ENCODE measurements at regions of chr3 and their contacts with region 1.

Region 1: GRCh38 chr3:79032686-79033318 is 735.0 kb downstream of the ROBO1 start:
- DNase-seq: no peak
- H3K4me3 ChIP-seq: no peak overlapping the region
- H3K27ac ChIP-seq: no peak overlapping the region
- H3K4me1 ChIP-seq: no peaks in the 10 kb centered on the region
- H3K27me3 ChIP-seq: no peaks in the 10 kb centered on the region
- CTCF ChIP-seq: peak in 5 of 6 experiments; percentile 59 to 75 (median 63)
- POLR2A ChIP-seq: no peak

Region 2: GRCh38 chr3:78660957-78661356 is 371.8 kb before region 1 on chr3:
- intact Hi-C with region 1: loop called (anchors 5 kb)
- DNase-seq: no peak
- H3K4me3 ChIP-seq: no peak overlapping the region
- H3K27ac ChIP-seq: no peak overlapping the region
- H3K4me1 ChIP-seq: peaks cover 0 to 3% (median 3%) of the 10 kb centered on the region in 3 donors
- H3K27me3 ChIP-seq: no peaks in the 10 kb centered on the region
- CTCF ChIP-seq: no peak
- POLR2A ChIP-seq: no peak

Region 3: GRCh38 chr3:78765671-78766485 is 266.9 kb before region 1 on chr3:
- intact Hi-C with region 1: no loop called
- DNase-seq: no peak
- H3K4me3 ChIP-seq: no peak overlapping the region
- H3K27ac ChIP-seq: no peak overlapping the region
- H3K4me1 ChIP-seq: no peaks in the 10 kb centered on the region
- H3K27me3 ChIP-seq: no peaks in the 10 kb centered on the region
- CTCF ChIP-seq: no peak
- POLR2A ChIP-seq: no peak

Region 4: GRCh38 chr3:78823852-78824251 is 208.9 kb before region 1 on chr3:
- intact Hi-C with region 1: no loop called
- DNase-seq: no peak
- H3K4me3 ChIP-seq: no peak overlapping the region
- H3K27ac ChIP-seq: no peak overlapping the region
- H3K4me1 ChIP-seq: peaks cover 0 to 22% (median 4%) of the 10 kb centered on the region in 3 donors
- H3K27me3 ChIP-seq: no peaks in the 10 kb centered on the region
- CTCF ChIP-seq: no peak
- POLR2A ChIP-seq: no peak

Region 5: DNA sequence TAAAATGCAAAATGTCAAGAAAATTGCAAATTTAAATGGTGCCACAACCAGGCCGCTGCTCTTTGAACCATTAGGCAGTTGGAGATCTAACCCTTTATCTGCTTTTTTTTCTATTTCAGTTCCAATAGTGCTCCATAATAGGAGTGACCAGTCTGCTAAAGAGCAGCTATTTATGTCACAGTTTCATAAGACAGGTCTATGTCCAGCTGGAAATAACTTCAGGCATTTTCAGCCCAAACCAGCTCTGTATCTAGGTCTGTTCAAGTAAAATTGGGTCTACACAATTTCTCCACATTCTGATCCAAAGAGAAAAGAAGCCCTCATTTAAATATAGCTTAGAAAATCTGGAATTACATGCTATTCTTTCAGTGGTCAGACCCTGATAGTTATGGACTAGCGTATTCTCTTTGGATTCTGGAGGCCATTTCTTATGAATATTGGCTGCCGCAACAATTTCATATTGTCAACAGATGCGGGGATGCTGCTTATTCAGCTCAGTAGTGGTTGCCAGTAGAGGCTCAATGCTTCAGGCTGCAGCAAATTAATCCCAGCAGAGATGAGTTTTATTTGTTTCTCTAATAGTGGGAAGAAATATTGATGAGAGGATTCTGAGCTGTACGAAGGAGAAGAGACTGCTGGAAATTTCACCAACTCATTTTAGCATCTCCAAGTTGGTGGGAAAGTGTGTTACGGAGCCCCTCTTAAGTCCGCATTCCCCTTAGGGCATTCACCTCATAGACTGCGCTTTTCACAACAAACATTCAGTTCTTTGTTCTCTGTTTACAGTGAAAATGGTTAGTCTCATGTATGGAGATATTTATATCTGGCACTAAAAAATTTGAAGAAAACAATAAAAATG is 152.0 kb before region 1 on chr3:
- intact Hi-C with region 1: no loop called
- DNase-seq: no peak
- H3K4me3 ChIP-seq: no peak overlapping the region
- H3K27ac ChIP-seq: peak overlapping the region in 1 of 4 donors; percentile 15
- H3K4me1 ChIP-seq: no peaks in the 10 kb centered on the region
- H3K27me3 ChIP-seq: no peaks in the 10 kb centered on the region
- CTCF ChIP-seq: no peak
- POLR2A ChIP-seq: no peak

Region 6: GRCh38 chr3:79233431-79234060 is 200.7 kb after region 1 on chr3:
- intact Hi-C with region 1: no loop called
- DNase-seq: no peak
- H3K4me3 ChIP-seq: no peak overlapping the region
- H3K27ac ChIP-seq: no peak overlapping the region
- H3K4me1 ChIP-seq: no peaks in the 10 kb centered on the region
- H3K27me3 ChIP-seq: no peaks in the 10 kb centered on the region
- CTCF ChIP-seq: no peak
- POLR2A ChIP-seq: no peak

Measured in esophagus squamous epithelium (tissue), 5 donors.